T-cell (primary cell): ENCODE measurements at regions of chr13 and their contacts with region 1.

Region 1: DNA sequence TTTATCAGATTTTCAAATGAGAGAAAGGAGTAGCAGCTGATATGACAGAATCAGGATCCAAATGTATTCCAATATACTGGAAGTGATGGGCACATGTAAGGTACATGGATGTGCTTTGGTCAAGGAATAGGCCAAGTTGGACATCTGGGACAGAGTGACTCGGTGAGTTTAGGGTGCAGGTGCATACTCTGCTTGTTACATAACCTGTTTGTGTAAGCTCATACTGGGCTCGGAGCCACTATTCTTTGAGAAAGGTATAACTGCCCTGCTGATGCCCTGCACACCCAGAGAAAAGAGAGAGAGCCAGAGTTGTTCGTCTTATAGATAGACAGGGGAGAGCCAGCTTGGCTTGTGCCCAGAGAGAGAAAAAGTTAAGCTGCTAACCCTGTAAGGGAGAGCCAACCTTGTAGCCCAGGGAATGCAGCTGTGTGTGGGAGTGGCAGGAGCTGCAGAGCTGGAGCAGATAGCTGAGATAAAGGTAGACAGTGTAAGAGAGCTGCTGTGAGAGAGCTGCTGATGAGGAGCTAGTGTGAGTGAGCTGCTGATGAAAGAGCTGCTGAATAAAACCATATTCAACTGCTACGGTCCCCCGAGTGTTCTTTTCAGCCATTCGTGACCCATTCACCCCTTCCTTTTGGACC is 40.7 kb upstream of the N4BP2L1 start:
- DNase-seq: no peak
- ATAC-seq: no peak
- H3K4me3 ChIP-seq: no peak overlapping the region
- H3K4me3 Mint-ChIP-seq: no peak overlapping the region
- H3K27ac ChIP-seq: no peak overlapping the region
- H3K27ac Mint-ChIP-seq: no peak overlapping the region
- H3K4me1 ChIP-seq: no peaks in the 10 kb centered on the region
- H3K4me1 Mint-ChIP-seq: peaks cover 0 to 3% (median 0%) of the 10 kb centered on the region in 3 donors
- H3K27me3 ChIP-seq: no peaks in the 10 kb centered on the region
- H3K27me3 Mint-ChIP-seq: no peaks in the 10 kb centered on the region

Region 2: GRCh38 chr13:32432856-32433255 is 35.8 kb before region 1 on chr13:
- CTCF ChIA-PET with region 1: no interaction called
- POLR2A ChIA-PET with region 1: no interaction called
- DNase-seq: no peak
- ATAC-seq: no peak
- H3K4me3 ChIP-seq: no peak overlapping the region
- H3K4me3 Mint-ChIP-seq: no peak overlapping the region
- H3K27ac ChIP-seq: no peak overlapping the region
- H3K27ac Mint-ChIP-seq: no peak overlapping the region
- H3K4me1 ChIP-seq: peaks cover 2 to 13% of the 10 kb centered on the region in 2 experiments
- H3K4me1 Mint-ChIP-seq: peaks cover 7 to 14% (median 10%) of the 10 kb centered on the region in 3 donors
- H3K27me3 ChIP-seq: no peaks in the 10 kb centered on the region
- H3K27me3 Mint-ChIP-seq: no peaks in the 10 kb centered on the region

Region 3: DNA sequence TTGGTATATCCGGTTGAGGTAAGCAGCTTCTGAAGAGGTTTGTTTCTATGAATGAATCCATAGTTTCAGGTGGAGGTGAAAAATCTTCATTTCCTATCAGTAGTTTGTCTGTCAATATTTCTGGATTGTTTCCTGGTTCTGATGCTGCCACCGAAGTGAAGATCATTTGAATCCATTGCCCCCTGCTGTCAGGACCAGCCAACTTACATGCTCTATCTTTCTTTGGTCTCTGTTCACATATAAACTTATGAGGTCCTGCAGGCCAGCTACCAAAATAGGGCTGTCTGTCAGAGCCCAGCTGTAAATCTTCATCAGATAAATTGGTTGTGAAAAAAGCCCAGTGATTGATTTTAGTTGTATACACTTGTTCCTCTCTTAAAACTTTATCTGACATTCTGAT is 25.5 kb before region 1 on chr13:
- CTCF ChIA-PET with region 1: no interaction called
- POLR2A ChIA-PET with region 1: no interaction called
- DNase-seq: peak in 30 of 35 experiments; percentile 6 to 71 (median 28)
- ATAC-seq: peak in 3 of 4 experiments; percentile 63 to 77 (median 72)
- H3K4me3 ChIP-seq: no peak overlapping the region
- H3K4me3 Mint-ChIP-seq: no peak overlapping the region
- H3K27ac ChIP-seq: no peak overlapping the region
- H3K27ac Mint-ChIP-seq: peak overlapping the region; percentile 44 to 69
- H3K4me1 ChIP-seq: no peaks in the 10 kb centered on the region
- H3K4me1 Mint-ChIP-seq: peaks cover 3 to 5% (median 3%) of the 10 kb centered on the region in 3 donors
- H3K27me3 ChIP-seq: no peaks in the 10 kb centered on the region
- H3K27me3 Mint-ChIP-seq: no peaks in the 10 kb centered on the region

Region 4: GRCh38 chr13:32538621-32539246 is 70.1 kb after region 1 on chr13 and contains the start of gene N4BP2L2:
- CTCF ChIA-PET with region 1: no interaction called
- POLR2A ChIA-PET with region 1: interaction called in 1 of 2 experiments, 11 read pairs
- DNase-seq: peak; percentile 75 to 96 (median 91)
- ATAC-seq: peak; percentile 96 to 98 (median 98)
- H3K4me3 ChIP-seq: peak within 1 kb of the TSS; percentile 65 to 100
- H3K4me3 Mint-ChIP-seq: peak within 1 kb of the TSS; percentile 99
- H3K27ac ChIP-seq: peak within 1 kb of the TSS; percentile 97
- H3K27ac Mint-ChIP-seq: peak within 1 kb of the TSS; percentile 99 to 100
- H3K4me1 ChIP-seq: peaks cover 7 to 30% of the 10 kb centered on the region in 2 experiments
- H3K4me1 Mint-ChIP-seq: peaks cover 45 to 47% (median 46%) of the 10 kb centered on the region in 3 donors
- H3K27me3 ChIP-seq: no peaks in the 10 kb centered on the region
- H3K27me3 Mint-ChIP-seq: peaks cover 2 to 6% of the 10 kb centered on the region in 2 donors
- total RNA-seq, gene N4BP2L2: 200 to 241 (median 216) TPM

Region 5: GRCh38 chr13:32682740-32683139 is 214.1 kb after region 1 on chr13:
- CTCF ChIA-PET with region 1: no interaction called
- POLR2A ChIA-PET with region 1: no interaction called
- DNase-seq: no peak
- ATAC-seq: no peak
- H3K4me3 ChIP-seq: no peak overlapping the region
- H3K4me3 Mint-ChIP-seq: no peak overlapping the region
- H3K27ac ChIP-seq: no peak overlapping the region
- H3K27ac Mint-ChIP-seq: no peak overlapping the region
- H3K4me1 ChIP-seq: no peaks in the 10 kb centered on the region
- H3K4me1 Mint-ChIP-seq: no peaks in the 10 kb centered on the region
- H3K27me3 ChIP-seq: no peaks in the 10 kb centered on the region
- H3K27me3 Mint-ChIP-seq: no peaks in the 10 kb centered on the region